OCI-LY7 (cell line): ENCODE measurements at regions of chr18 and their contacts with region 1.

Region 1: DNA sequence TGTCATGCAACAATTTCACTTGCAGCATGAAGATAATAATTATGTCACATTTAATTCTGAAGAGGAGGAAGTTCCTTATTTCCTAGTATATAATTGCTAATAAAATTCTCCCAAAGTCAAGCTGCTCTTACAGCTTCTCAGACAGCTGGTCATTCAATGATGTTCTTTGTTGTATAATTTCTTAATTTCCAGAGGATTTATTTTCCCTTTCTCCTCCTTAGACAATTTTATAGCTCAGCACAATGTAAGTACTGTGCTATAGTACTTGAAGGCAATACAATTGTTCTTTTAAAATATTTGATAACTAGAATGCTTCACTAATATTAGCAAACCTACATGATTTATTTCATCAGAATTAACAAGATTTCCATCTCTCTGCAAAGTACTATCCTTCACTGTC is 73.4 kb downstream of the ROCK1 start:
- DNase-seq: no peak
- H3K4me3 ChIP-seq: no peak overlapping the region
- H3K27ac ChIP-seq: no peak overlapping the region
- H3K4me1 ChIP-seq: no peaks in the 10 kb centered on the region
- CTCF ChIP-seq: no peak

Region 2: GRCh38 chr18:21049306-21049705 is 11.1 kb after region 1 on chr18:
- CTCF ChIA-PET with region 1: no interaction called
- POLR2A ChIA-PET with region 1: interaction called, 10 read pairs
- intact Hi-C with region 1: no loop called
- DNase-seq: no peak
- H3K4me3 ChIP-seq: no peak overlapping the region
- H3K27ac ChIP-seq: no peak overlapping the region
- H3K4me1 ChIP-seq: peaks cover 6% of the 10 kb centered on the region
- CTCF ChIP-seq: no peak